ENCODE measurements at regions of chr9 and their contacts with region 1.

Region 1: DNA sequence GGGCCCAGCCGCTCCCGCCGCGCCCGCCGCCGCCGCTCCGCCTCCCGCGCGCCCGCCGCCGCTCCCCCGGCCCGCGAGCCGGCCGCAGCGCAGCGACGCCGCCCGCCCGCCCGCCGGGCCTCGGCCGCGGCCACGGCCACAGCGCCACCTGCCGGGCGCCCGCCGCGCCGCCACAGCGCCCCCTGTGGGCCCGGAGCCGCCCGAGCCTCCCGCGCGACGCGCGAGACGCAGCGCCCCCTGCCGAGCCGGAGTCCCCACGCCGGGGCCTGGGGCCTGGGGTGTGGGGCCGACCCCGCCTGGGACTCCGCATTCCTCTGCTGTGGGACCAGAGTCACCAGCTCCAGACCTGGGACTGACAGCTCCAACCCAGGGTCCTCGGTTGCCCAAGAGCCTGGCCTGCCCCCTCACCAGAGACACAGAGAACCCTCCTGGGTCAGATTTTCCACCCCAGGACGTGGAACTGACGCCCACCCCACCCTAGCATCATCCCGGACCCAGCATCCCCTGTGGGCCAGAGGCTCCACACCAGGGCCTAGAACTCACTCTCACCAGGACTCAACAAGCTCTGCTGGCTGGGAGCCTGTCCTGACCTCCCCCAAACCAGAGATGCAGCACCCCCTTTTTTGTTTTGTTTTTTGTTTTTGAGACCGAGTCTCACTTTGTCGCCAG is at the start of gene RAPGEF1:
- DNase-seq: peak; percentile 84
- H3K4me3 Mint-ChIP-seq: peak within 1 kb of the TSS; percentile 92
- H3K27ac Mint-ChIP-seq: peak within 1 kb of the TSS; percentile 85
- H3K4me1 Mint-ChIP-seq: peaks cover 62% of the 10 kb centered on the region
- H3K27me3 Mint-ChIP-seq: no peaks in the 10 kb centered on the region
- total RNA-seq, gene RAPGEF1: 168 and 172 TPM in 2 replicates

Region 2: DNA sequence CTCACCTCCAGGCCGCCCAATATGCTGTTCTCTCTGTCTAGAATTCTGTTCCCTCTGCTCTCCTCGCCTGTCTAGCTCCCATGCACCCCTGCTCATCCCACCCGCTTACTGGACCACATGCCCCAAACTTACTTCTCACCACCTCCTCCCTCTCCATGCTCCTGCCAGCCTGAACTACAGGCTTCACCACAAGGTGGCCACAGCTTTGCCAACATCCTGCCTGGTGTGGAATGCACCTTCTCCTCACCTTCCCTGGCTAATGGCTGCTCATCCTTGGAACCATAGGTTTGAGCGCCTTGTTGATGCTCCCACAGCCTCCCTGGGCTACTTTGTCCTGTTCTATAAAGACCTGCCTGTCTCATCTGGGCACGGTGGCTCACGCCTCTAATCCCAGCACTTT is 721.5 kb before region 1 on chr9:
- intact Hi-C with region 1: no loop called
- DNase-seq: no peak
- H3K4me3 Mint-ChIP-seq: no peak overlapping the region
- H3K27ac Mint-ChIP-seq: no peak overlapping the region
- H3K4me1 Mint-ChIP-seq: no peaks in the 10 kb centered on the region
- H3K27me3 Mint-ChIP-seq: peaks cover 4% of the 10 kb centered on the region

Region 3: GRCh38 chr9:131704141-131704983 is 35.8 kb before region 1 on chr9:
- intact Hi-C with region 1: loop called (anchors 5 kb)
- DNase-seq: no peak
- H3K4me3 Mint-ChIP-seq: peak overlapping the region; percentile 65
- H3K27ac Mint-ChIP-seq: peak overlapping the region; percentile 91
- H3K4me1 Mint-ChIP-seq: peaks cover 89% of the 10 kb centered on the region
- H3K27me3 Mint-ChIP-seq: no peaks in the 10 kb centered on the region